Cardiac septum (tissue), 1 donor: ENCODE measurements at regions of chr16 and their contacts with region 1.

Region 1: DNA sequence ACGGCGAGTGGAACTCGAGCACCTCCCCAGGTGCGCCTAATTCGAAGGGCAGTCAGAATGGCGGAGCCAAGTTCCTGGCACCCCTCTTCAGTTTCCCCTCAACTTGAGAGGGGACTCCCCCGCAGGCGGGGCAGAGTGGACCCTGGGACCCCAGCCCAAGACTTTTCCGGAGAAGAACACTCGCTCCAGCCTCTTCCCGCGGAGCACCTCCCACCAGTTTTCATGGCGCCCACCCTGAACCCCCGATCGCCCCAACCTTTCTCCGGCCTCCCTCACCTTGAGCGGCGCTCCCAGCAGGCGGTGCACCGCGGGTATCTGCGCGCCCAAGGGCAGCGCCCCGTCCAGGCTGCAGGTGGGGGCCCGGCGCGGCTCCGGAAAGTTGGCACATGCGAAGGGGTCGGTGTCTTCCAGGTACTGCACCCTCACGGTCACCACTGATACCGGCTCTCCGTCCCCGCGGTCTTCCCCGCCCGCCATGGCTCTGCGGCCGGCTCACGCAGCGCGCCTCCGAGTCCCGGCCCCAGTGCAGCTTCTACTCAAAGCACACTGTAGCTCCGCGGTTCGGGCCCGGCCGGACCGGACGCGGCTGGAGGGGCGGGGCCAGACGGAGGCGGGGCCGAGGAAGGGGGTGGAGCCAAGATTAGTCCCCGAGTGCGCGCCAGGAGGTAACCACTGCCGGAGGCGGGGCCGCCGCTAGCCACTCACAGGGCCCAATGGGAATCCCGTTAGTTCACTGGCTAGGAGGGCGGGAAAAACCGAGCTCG is at the start of gene FHOD1:
- DNase-seq: peak; percentile 100
- total RNA-seq, gene FHOD1: 33.4 TPM

Region 2: DNA sequence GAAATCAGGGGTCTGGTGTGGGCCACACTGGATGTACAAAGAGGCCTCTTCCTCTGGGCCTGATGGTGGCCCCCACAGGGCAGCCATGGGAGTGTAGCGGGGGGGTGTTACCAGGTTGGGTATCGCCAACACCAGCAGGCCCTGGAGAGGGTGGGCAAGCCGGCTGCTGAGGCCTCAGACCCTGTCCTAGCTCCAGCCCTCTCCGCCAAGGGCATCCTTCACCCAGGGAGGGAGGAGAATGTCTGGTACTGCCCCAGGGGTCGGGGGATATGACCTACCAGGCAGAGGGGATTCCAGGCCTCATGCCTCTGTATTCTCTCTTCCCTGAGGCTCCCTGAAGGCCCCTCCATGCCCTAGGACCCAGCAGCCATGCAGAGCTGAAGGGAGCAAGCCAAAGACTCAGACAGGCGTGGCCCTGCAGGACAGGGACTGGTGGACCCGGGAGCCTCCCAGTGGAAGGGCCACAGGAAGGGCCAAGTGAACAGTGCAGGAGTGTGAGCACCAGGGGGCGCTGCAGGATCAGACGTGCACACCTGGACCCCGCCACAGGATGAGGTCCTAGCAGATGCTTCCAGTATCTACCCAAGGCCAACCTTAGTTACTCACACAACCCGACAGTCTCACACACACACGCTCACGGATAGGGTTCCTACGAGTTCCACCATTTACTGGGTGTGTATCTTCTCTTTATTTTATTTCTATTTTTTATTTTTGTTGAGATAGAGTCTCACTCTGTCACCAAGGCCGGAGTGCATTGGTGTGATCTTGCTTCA is 269.6 kb before region 1 on chr16:
- intact Hi-C with region 1: loop called (anchors 5 kb)
- DNase-seq: peak; percentile 94

Region 3: GRCh38 chr16:67226804-67227557 is 20.1 kb before region 1 on chr16 and contains the start of gene TMEM208:
- intact Hi-C with region 1: loop called (anchors 1 kb)
- DNase-seq: peak; percentile 99
- total RNA-seq, gene TMEM208: 16.3 TPM